AG04449 (cell line): ENCODE measurements at regions of chr2 and their contacts with region 1.

Region 1: DNA sequence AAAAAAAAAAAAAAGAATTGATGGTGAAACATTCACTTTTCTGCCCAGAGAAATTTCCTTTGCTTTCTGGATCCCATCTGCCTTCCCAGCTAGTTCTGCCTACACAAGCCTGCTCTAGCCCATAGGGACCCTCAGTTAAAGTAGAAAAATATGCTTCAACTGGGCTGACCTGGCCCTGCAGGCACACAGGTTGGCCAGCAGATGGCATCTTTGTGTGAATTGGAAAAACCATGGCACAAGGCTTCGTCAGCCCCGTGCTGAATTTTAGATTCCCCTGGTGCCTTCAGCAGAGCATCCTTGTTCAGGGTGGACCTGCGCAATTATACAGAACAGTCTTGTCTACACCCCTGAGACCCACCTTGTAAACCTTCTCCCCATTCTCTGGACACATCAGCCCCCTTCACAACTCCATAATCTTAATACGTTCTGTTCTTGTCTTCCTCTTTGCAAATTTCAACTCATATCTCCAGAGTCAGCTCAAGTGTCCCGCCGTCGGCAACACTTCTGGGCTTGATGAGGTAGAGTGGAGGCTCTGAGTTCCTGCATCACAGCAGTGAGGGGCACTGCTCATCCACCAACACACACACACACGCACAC is 114.5 kb downstream of the INSIG2 start:
- DNase-seq: no peak
- H3K4me3 ChIP-seq: no peak overlapping the region
- CTCF ChIP-seq: peak; percentile 88

Region 2: GRCh38 chr2:118186110-118186857 is 16.5 kb before region 1 on chr2:
- CTCF ChIA-PET with region 1: interaction called, 26 read pairs
- POLR2A ChIA-PET with region 1: no interaction called
- DNase-seq: peak; percentile 17
- H3K4me3 ChIP-seq: peak overlapping the region; percentile 64
- CTCF ChIP-seq: peak; percentile 36

Region 3: GRCh38 chr2:118216224-118216623 is 13.4 kb after region 1 on chr2:
- CTCF ChIA-PET with region 1: interaction called, 19 read pairs
- POLR2A ChIA-PET with region 1: no interaction called
- DNase-seq: no peak
- H3K4me3 ChIP-seq: no peak overlapping the region
- CTCF ChIP-seq: no peak

Region 4: DNA sequence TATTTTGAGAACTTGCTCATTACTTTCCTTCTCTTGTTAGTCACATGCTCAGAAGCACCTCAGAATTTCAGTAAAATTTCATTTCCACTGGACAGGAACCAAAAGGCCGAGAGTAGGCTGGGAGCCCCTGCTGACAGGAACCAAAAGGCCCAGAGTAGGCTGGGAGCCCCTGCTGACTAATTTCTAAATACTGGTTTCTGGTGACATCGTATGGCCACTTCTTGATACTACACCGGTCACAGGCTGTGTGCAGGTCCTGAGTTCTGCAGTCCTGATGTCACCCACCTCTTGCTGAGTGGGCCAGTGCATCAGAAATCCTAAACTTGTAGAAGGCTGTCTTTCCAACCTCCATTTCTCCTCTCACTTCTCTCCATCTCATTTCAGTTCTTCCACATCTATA is 662.3 kb after region 1 on chr2:
- CTCF ChIA-PET with region 1: interaction called, 63 read pairs
- POLR2A ChIA-PET with region 1: no interaction called
- DNase-seq: no peak
- H3K4me3 ChIP-seq: no peak overlapping the region
- CTCF ChIP-seq: peak; percentile 71